ENCODE measurements at regions of chr19 and their contacts with region 1.

Region 1: DNA sequence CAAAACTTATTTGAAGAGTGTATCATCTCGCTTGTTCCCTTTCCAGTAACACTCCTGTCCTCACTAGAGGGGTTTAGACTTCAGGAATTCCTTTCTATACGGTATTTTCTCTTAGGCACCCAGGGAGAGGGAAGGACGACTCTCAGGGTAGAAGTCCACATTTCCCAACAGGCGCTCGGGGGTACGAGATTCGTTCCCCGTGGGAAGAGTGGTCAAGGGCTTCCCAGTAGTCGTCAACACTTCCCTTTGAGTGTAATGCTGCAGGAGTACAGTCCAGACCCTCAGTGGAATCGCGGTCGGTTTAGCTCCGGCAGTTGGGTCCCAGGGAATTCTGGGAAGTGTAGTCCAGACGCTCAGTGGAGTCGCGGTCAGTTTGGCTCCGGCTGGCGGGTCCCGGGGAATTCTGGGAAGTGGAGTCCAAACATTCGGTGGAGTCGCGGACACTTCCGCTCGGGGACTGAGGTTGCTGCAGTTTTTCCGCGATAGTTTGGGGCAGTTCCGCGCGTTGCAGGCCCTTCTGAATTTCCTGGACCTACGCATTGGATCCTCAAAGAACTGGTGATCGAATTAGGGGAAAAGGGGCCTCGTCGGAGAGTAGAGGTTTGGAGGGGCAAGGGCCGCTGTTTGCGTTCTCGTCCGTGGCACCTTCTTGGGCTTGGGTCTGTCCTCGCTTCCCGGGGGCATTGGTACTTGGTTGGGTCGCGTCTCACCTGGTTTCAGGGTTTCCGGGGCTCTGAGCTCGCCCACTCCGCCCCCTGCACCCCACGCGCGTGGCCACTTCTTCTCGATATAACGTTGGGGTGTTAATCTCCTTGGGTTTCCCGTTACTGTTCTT is at the start of gene ZNF224:
- DNase-seq: peak; percentile 92 to 94
- H3K4me3 ChIP-seq: peak within 1 kb of the TSS; percentile 74
- H3K4me3 Mint-ChIP-seq: peak within 1 kb of the TSS; percentile 92
- H3K27ac Mint-ChIP-seq: peak within 1 kb of the TSS; percentile 90
- H3K4me1 ChIP-seq: no peaks in the 10 kb centered on the region
- H3K4me1 Mint-ChIP-seq: no peaks in the 10 kb centered on the region
- H3K27me3 ChIP-seq: no peaks in the 10 kb centered on the region
- H3K27me3 Mint-ChIP-seq: no peaks in the 10 kb centered on the region
- CTCF ChIP-seq: no peak
- total RNA-seq, gene ZNF224: 24.7 and 25.9 TPM in 2 replicates

Region 2: GRCh38 chr19:43950834-43951645 is 143.1 kb before region 1 on chr19 and contains the start of gene ZNF221:
- CTCF ChIA-PET with region 1: no interaction called
- POLR2A ChIA-PET with region 1: no interaction called
- intact Hi-C with region 1: loop called (anchors 1 kb)
- DNase-seq: peak; percentile 94 to 95
- H3K4me3 ChIP-seq: peak within 1 kb of the TSS; percentile 58
- H3K4me3 Mint-ChIP-seq: peak within 1 kb of the TSS; percentile 100
- H3K27ac Mint-ChIP-seq: peak within 1 kb of the TSS; percentile 93
- H3K4me1 ChIP-seq: no peaks in the 10 kb centered on the region
- H3K4me1 Mint-ChIP-seq: no peaks in the 10 kb centered on the region
- H3K27me3 ChIP-seq: no peaks in the 10 kb centered on the region
- H3K27me3 Mint-ChIP-seq: peaks cover 11% of the 10 kb centered on the region
- CTCF ChIP-seq: peak; percentile 19 to 35
- total RNA-seq, gene ZNF221: 4.3 and 6.2 TPM in 2 replicates

Region 3: DNA sequence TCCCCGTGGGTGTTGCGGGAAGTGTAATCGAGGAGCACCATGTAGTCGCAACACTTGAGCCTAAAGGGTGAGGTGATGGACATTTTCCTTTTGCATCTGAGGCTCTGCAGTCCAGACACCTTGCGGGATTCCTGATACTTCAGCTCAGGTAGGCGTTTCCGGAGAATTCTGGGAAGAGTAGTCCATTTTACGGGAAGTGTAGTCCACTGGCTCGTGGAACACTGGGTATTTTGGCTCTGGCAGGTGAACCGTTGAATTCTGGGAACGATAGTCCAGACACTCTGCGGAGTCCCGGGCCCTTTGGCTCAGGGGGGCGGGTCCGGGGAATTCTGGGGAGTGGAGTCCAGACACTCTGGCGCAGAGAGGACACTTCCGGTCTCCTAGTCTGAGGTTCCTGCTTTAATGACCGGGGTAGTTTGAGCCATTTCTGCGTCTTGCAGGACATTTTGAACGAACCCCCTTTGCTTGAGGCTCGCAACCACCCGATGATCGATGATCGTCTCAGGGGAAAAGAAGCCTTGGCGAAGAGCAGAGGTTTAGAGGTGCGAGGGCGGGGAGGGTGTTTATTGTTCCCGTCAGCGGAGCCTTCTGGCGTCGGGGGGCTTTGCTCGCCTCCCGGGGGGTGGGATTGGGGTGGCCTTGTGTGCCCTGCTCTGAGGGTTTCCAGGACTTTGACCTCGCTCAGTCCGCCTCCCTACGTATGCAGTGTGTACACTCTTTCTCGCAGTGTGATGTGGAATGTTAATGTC is 42.3 kb before region 1 on chr19 and contains the start of gene ZNF223:
- CTCF ChIA-PET with region 1: interaction called, 3 read pairs
- POLR2A ChIA-PET with region 1: interaction called, 3 read pairs
- intact Hi-C with region 1: loop called (anchors 1 kb)
- DNase-seq: peak; percentile 98
- H3K4me3 ChIP-seq: peak within 1 kb of the TSS; percentile 69
- H3K4me3 Mint-ChIP-seq: peak within 1 kb of the TSS; percentile 74
- H3K27ac Mint-ChIP-seq: peak within 1 kb of the TSS; percentile 85
- H3K4me1 ChIP-seq: peaks cover 7% of the 10 kb centered on the region
- H3K4me1 Mint-ChIP-seq: peaks cover 30% of the 10 kb centered on the region
- H3K27me3 ChIP-seq: no peaks in the 10 kb centered on the region
- H3K27me3 Mint-ChIP-seq: no peaks in the 10 kb centered on the region
- CTCF ChIP-seq: no peak
- total RNA-seq, gene ZNF223: 9.9 and 11.3 TPM in 2 replicates

Region 4: DNA sequence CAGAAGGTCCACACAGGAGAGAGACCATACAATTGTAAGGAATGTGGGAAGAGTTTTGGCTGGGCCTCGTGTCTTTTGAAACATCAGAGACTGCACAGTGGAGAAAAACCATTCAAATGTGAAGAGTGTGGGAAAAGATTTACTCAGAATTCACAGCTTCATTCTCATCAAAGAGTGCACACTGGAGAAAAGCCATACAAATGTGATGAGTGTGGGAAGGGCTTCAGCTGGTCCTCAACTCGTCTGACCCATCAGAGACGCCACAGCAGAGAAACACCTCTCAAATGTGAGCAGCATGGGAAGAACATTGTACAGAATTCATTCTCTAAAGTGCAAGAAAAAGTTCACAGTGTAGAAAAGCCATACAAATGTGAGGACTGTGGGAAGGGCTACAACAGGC is 13.6 kb after region 1 on chr19:
- CTCF ChIA-PET with region 1: no interaction called
- POLR2A ChIA-PET with region 1: no interaction called
- intact Hi-C with region 1: no loop called
- DNase-seq: no peak
- H3K4me3 ChIP-seq: no peak overlapping the region
- H3K4me3 Mint-ChIP-seq: no peak overlapping the region
- H3K27ac Mint-ChIP-seq: no peak overlapping the region
- H3K4me1 ChIP-seq: no peaks in the 10 kb centered on the region
- H3K4me1 Mint-ChIP-seq: peaks cover 7% of the 10 kb centered on the region
- H3K27me3 ChIP-seq: no peaks in the 10 kb centered on the region
- H3K27me3 Mint-ChIP-seq: no peaks in the 10 kb centered on the region
- CTCF ChIP-seq: no peak

Region 5: DNA sequence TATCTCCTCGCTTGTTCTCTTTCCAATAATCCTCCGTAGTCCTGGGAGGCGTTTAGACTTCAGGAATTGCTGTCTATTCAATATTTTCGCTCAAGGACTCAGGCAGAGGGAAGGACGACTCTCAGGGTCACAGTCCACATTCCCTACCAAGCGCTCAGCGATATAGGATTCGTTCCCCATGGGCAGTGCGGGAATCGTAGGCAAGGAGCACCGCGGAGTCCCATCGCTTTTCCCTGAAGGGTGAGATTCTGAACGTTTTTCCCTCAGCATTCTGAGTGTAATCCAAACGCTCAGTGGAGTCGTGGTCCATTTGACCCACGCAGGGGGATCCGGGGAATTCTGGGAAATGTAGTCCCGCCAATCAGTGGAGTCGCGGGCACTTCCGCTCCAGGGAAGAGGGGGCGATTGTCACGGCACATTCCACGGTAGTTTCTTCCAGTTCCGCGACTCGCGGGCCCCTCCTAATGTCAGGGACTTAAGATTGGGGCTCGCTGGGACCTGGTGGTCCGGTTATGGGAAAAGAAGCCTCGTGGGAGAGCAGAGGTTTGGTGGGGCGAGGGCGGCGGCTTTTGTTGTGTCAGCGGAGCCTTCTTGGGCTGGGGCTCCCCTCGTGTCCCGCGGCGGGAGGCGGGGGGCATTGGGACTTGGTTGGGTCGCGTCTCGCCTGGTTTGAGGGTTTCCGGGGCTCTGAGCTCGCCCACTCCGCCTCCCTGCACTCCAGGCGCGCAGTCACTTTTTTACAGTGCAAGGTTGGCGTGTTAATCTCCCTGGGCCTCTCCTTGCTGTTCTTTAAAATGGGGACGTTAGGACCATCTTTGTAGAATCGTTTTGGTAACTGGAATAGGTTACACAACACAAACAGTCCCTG is 47.3 kb after region 1 on chr19 and contains the start of gene ZNF234:
- CTCF ChIA-PET with region 1: no interaction called
- POLR2A ChIA-PET with region 1: no interaction called
- intact Hi-C with region 1: loop called (anchors 2 kb)
- DNase-seq: peak; percentile 88 to 92
- H3K4me3 ChIP-seq: peak within 1 kb of the TSS; percentile 80
- H3K4me3 Mint-ChIP-seq: peak within 1 kb of the TSS; percentile 84
- H3K27ac Mint-ChIP-seq: peak within 1 kb of the TSS; percentile 54
- H3K4me1 ChIP-seq: 0 out of 2 replicates have a peak, but pooled peaks cover 4% of the 10 kb centered on the region
- H3K4me1 Mint-ChIP-seq: no peaks in the 10 kb centered on the region
- H3K27me3 ChIP-seq: no peaks in the 10 kb centered on the region
- H3K27me3 Mint-ChIP-seq: peaks cover 9% of the 10 kb centered on the region
- CTCF ChIP-seq: no peak
- total RNA-seq, gene ZNF234: 9.4 and 13.3 TPM in 2 replicates

Region 6: DNA sequence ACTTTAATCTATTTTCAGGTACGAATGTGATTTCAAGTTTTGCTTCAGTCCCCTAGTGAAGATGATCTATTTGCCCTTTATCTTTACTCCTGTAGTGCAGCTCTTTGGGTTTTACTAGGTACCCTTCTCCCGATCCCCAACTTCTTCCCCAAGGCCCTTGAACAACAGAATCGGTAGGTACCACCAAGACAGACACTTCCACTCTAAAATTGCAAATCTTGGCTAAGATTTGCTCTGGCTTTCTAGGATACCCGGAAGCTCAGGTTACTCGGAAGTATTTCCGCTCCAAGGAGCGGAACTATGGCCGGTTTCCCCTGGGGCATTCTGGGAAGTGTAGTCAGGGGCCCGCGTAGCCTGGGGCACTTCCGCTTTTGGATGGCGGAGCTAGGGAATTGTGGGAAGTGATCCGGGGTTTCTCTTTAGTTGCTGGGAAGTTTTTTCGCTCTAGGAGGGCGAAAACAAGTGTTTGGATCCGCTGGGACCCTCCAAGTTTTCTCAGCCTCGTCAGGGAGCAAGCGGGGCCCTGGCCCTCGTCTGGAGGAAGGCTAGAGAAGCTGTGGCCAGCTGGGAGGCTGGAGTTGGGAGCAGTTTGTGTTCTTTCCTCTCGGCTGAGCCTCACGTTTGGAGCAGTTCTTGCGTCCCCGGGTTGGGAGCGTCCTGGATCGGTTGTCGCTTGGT is 113.1 kb after region 1 on chr19:
- CTCF ChIA-PET with region 1: no interaction called
- POLR2A ChIA-PET with region 1: no interaction called
- intact Hi-C with region 1: loop called (anchors 5 kb)
- DNase-seq: peak; percentile 95 to 96
- H3K4me3 ChIP-seq: peak overlapping the region; percentile 43
- H3K4me3 Mint-ChIP-seq: peak overlapping the region; percentile 89
- H3K27ac Mint-ChIP-seq: peak overlapping the region; percentile 80
- H3K4me1 ChIP-seq: no peaks in the 10 kb centered on the region
- H3K4me1 Mint-ChIP-seq: peaks cover 6% of the 10 kb centered on the region
- H3K27me3 ChIP-seq: no peaks in the 10 kb centered on the region
- H3K27me3 Mint-ChIP-seq: peaks cover under 1% of the 10 kb centered on the region
- CTCF ChIP-seq: no peak